ENCODE measurements at regions of chr5 and their contacts with region 1.

Region 1: DNA sequence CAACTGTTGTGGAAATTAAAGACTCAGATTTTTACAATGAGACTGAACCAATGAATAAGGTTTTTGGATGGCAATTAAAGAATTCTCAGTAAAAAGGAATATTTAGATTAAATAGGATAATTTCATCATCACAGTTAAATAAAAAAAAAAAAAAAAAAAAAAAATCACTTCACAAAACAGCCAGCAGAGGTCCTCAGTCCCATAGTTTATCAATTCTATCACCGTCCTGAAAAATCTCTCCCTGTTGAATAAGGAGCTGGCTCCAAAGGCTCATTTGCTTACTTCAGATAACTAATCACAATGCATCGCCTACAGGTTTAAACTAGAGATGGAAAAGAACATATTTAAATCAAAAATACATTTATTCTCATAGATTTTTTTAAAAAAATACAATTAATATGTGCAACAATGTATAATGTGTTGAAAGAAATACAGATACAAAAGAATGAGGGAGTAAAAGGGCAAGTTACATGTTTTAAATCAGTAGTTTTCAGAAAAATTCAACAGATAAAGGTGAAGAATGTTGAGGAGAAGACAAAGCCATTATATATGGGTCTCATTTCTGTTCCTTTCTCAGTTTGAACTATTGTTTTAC is 175.8 kb upstream of the CHD1 start:
- DNase-seq: no peak
- ATAC-seq: peak; percentile 47; the same call in 1 of the 2 replicates
- H3K4me3 Mint-ChIP-seq: no peak overlapping the region
- H3K27ac Mint-ChIP-seq: no peak overlapping the region
- H3K4me1 Mint-ChIP-seq: no peaks in the 10 kb centered on the region
- H3K27me3 Mint-ChIP-seq: no peaks in the 10 kb centered on the region
- CTCF ChIP-seq: peak; percentile 30; the same call in 1 of the 2 replicates

Region 2: GRCh38 chr5:99122976-99123375 is 18.3 kb after region 1 on chr5:
- CTCF ChIA-PET with region 1: interaction called, 13 read pairs
- POLR2A ChIA-PET with region 1: no interaction called
- DNase-seq: no peak
- ATAC-seq: no peak
- H3K4me3 Mint-ChIP-seq: no peak overlapping the region
- H3K27ac Mint-ChIP-seq: no peak overlapping the region
- H3K4me1 Mint-ChIP-seq: no peaks in the 10 kb centered on the region
- H3K27me3 Mint-ChIP-seq: no peaks in the 10 kb centered on the region
- CTCF ChIP-seq: no peak

Region 3: GRCh38 chr5:99129768-99130501 is 25.3 kb after region 1 on chr5:
- CTCF ChIA-PET with region 1: interaction called, 14 read pairs
- POLR2A ChIA-PET with region 1: no interaction called
- DNase-seq: no peak
- ATAC-seq: no peak
- H3K4me3 Mint-ChIP-seq: no peak overlapping the region
- H3K27ac Mint-ChIP-seq: no peak overlapping the region
- H3K4me1 Mint-ChIP-seq: no peaks in the 10 kb centered on the region
- H3K27me3 Mint-ChIP-seq: no peaks in the 10 kb centered on the region
- CTCF ChIP-seq: no peak

Region 4: DNA sequence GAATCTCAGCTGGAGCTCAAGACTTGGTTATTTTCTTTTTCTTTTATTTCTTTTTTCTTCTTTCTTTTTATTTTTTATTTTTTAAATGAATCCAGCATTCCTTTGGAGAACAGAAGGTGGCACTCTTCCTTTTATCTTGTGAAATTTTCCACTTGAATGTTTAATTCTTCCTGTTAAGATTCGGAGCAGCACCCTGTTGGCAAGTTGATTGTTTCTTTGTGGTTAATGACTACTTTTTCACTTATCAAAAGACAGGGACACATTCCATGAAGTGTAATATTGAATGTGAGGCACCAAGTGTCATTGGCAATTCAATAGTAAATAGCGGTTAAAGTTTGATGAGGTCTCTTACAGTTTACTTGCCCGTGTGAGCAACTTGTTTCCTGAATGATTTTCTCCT is 64.7 kb after region 1 on chr5:
- CTCF ChIA-PET with region 1: interaction called, 13 read pairs
- POLR2A ChIA-PET with region 1: no interaction called
- DNase-seq: no peak
- ATAC-seq: peak; percentile 59; the same call in 1 of the 2 replicates
- H3K4me3 Mint-ChIP-seq: no peak overlapping the region
- H3K27ac Mint-ChIP-seq: no peak overlapping the region
- H3K4me1 Mint-ChIP-seq: peaks cover 19% of the 10 kb centered on the region
- H3K27me3 Mint-ChIP-seq: no peaks in the 10 kb centered on the region
- CTCF ChIP-seq: no peak

Region 5: DNA sequence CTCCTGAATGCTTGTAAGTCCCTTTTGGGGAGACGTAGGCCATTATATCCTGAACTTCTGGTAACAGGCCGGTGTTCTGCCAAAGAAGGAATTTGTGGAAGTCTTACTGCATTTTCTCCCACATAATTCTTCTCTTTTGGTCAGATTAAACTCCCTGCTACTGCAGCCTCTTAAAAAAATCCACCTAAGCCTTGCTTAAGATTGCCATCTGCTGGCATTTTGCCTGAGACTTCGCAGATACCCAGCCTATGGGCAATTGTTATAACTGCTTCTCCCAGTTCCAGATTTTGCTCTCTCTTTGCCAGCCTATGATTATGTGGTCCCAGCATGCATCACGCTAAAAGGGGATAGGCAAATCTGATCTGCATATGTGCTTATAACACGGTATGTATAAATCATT is 215.8 kb after region 1 on chr5:
- CTCF ChIA-PET with region 1: interaction called, 11 read pairs
- POLR2A ChIA-PET with region 1: no interaction called
- DNase-seq: no peak
- ATAC-seq: peak; percentile 68
- H3K4me3 Mint-ChIP-seq: no peak overlapping the region
- H3K27ac Mint-ChIP-seq: no peak overlapping the region
- H3K4me1 Mint-ChIP-seq: no peaks in the 10 kb centered on the region
- H3K27me3 Mint-ChIP-seq: no peaks in the 10 kb centered on the region
- CTCF ChIP-seq: no peak